Sigmoid colon (tissue), 7 donors: ENCODE measurements at regions of chr3 and their contacts with region 1.

Region 1: GRCh38 chr3:63967675-63968611 is 55.4 kb downstream of the PSMD6 start:
- DNase-seq: peak; percentile 74
- H3K4me3 ChIP-seq: peak overlapping the region; percentile 2 to 36 (median 20)
- H3K27ac ChIP-seq: peak overlapping the region; percentile 77 to 81 (median 78)
- H3K4me1 ChIP-seq: peaks cover 0 to 94% (median 83%) of the 10 kb centered on the region in 4 donors
- H3K27me3 ChIP-seq: no peaks in the 10 kb centered on the region
- CTCF ChIP-seq: no peak
- EP300 ChIP-seq: no peak
- POLR2A ChIP-seq: no peak

Region 2: GRCh38 chr3:63863148-63864007 is 104.6 kb before region 1 on chr3 and contains the starts of genes ATXN7 and THOC7:
- intact Hi-C with region 1: loop called (anchors 5 kb)
- DNase-seq: peak; percentile 83
- H3K4me3 ChIP-seq: peak within 1 kb of the TSS; percentile 95 to 99 (median 98)
- H3K27ac ChIP-seq: peak within 1 kb of the TSS; percentile 84 to 95 (median 94)
- H3K4me1 ChIP-seq: peaks cover 0 to 33% (median 25%) of the 10 kb centered on the region in 4 donors
- H3K27me3 ChIP-seq: no peaks in the 10 kb centered on the region
- CTCF ChIP-seq: no peak
- EP300 ChIP-seq: no peak
- POLR2A ChIP-seq: no peak
- total RNA-seq, gene ATXN7: 17.8 to 32.7 (median 27.3) TPM
- total RNA-seq, gene THOC7: 76.6 to 129 (median 115) TPM